Heart right ventricle (tissue), 16 donors: ENCODE measurements at regions of chr4 and their contacts with region 1.

Region 1: DNA sequence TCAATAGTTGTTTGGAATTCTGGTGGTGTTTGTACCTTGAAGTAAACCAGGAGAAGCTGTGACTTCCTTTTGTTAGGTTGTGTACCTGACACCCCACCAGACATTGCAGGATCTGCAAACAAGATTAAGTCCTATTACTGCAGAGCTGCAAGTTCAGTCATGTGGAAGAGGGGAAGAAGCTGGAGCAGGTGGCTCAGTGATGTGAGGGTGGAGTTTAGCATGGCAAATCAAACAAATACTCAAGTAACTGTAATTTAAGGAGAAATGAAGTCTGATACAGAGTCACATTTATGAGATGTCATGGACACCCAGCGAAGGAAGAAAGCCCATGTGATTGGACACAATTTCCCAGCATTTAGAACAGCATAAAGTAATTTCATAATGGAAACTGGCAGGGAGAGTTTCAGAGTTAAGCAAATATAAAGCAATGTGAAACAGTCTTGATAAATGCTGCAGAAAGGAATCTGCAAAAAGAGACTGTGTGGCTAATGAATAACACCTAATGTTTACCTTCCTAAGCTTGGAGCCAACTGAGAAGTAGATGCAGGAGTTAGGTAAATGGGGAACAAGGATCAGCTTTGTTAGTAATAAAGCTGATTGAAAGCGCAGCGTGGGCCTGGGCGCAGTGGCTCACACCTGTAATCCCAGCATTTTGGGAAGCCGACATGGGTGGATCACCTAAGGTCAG is 249.1 kb downstream of the GBA3 start:
- DNase-seq: no peak
- ATAC-seq: no peak
- H3K4me3 ChIP-seq: no peak overlapping the region
- H3K27ac ChIP-seq: no peak overlapping the region
- H3K4me1 ChIP-seq: no peaks in the 10 kb centered on the region
- H3K27me3 ChIP-seq: no peaks in the 10 kb centered on the region
- CTCF ChIP-seq: no peak

Region 2: GRCh38 chr4:22869235-22869634 is 72.6 kb before region 1 on chr4:
- intact Hi-C with region 1: loop called in 1 of 10 experiments (anchors 2 kb)
- DNase-seq: no peak
- ATAC-seq: no peak
- H3K4me3 ChIP-seq: no peak overlapping the region
- H3K27ac ChIP-seq: no peak overlapping the region
- H3K4me1 ChIP-seq: no peaks in the 10 kb centered on the region
- H3K27me3 ChIP-seq: no peaks in the 10 kb centered on the region
- CTCF ChIP-seq: no peak